ENCODE measurements at regions of chr16 and their contacts with region 1.

Region 1: GRCh38 chr16:636206-637080 is at the start of gene METTL26:
- DNase-seq: peak; percentile 91 to 98 (median 94)
- ATAC-seq: peak; percentile 90
- H3K4me3 ChIP-seq: peak within 1 kb of the TSS; percentile 99
- H3K4me3 Mint-ChIP-seq: peak within 1 kb of the TSS; percentile 92 to 99 (median 98)
- H3K27ac ChIP-seq: peak within 1 kb of the TSS; percentile 76
- H3K27ac Mint-ChIP-seq: peak within 1 kb of the TSS; percentile 97 to 99 (median 99)
- H3K4me1 ChIP-seq: peaks cover 5 to 14% of the 10 kb centered on the region in 2 donors
- H3K4me1 Mint-ChIP-seq: peaks cover 0 to 13% (median 10%) of the 10 kb centered on the region in 7 donors
- H3K27me3 ChIP-seq: no peaks in the 10 kb centered on the region
- H3K27me3 Mint-ChIP-seq: peaks cover 0 to 6% (median 0%) of the 10 kb centered on the region in 5 donors
- total RNA-seq, gene METTL26: 41.7 to 97.5 (median 64.0) TPM

Region 2: GRCh38 chr16:425082-425718 is 211.2 kb before region 1 on chr16 and contains the start of gene RAB11FIP3:
- CTCF ChIA-PET with region 1: no interaction called
- POLR2A ChIA-PET with region 1: no interaction called
- intact Hi-C with region 1: loop called in 1 of 2 experiments (anchors 1 kb)
- DNase-seq: peak; percentile 80 to 91 (median 87)
- ATAC-seq: peak; percentile 94
- H3K4me3 ChIP-seq: peak within 1 kb of the TSS; percentile 83
- H3K4me3 Mint-ChIP-seq: peak within 1 kb of the TSS; percentile 78 to 92 (median 88)
- H3K27ac ChIP-seq: peak within 1 kb of the TSS; percentile 92
- H3K27ac Mint-ChIP-seq: peak within 1 kb of the TSS in 8 of 9 donors; percentile 78 to 95 (median 90)
- H3K4me1 ChIP-seq: peaks cover 10 to 17% of the 10 kb centered on the region in 2 donors
- H3K4me1 Mint-ChIP-seq: peaks cover 22 to 39% (median 32%) of the 10 kb centered on the region in 7 donors
- H3K27me3 ChIP-seq: no peaks in the 10 kb centered on the region
- H3K27me3 Mint-ChIP-seq: peaks cover 0 to 18% (median 0%) of the 10 kb centered on the region in 5 donors
- total RNA-seq, gene RAB11FIP3: 37.9 to 53.0 (median 45.5) TPM

Region 3: GRCh38 chr16:589658-590159 is 46.7 kb before region 1 on chr16 and contains the start of gene RAB40C:
- CTCF ChIA-PET with region 1: no interaction called
- POLR2A ChIA-PET with region 1: interaction called, 5 read pairs
- intact Hi-C with region 1: loop called (anchors 1 kb)
- DNase-seq: peak; percentile 96 to 99 (median 99)
- ATAC-seq: peak; percentile 91
- H3K4me3 ChIP-seq: peak within 1 kb of the TSS; percentile 93
- H3K4me3 Mint-ChIP-seq: peak within 1 kb of the TSS; percentile 86 to 100 (median 98)
- H3K27ac ChIP-seq: peak within 1 kb of the TSS; percentile 93
- H3K27ac Mint-ChIP-seq: peak within 1 kb of the TSS; percentile 95 to 100 (median 99)
- H3K4me1 ChIP-seq: peaks cover 15 to 17% of the 10 kb centered on the region in 2 donors
- H3K4me1 Mint-ChIP-seq: peaks cover 25 to 50% (median 45%) of the 10 kb centered on the region in 7 donors
- H3K27me3 ChIP-seq: no peaks in the 10 kb centered on the region
- H3K27me3 Mint-ChIP-seq: no peaks in the 10 kb centered on the region
- total RNA-seq, gene RAB40C: 15.8 to 23.2 (median 17.8) TPM

Region 4: DNA sequence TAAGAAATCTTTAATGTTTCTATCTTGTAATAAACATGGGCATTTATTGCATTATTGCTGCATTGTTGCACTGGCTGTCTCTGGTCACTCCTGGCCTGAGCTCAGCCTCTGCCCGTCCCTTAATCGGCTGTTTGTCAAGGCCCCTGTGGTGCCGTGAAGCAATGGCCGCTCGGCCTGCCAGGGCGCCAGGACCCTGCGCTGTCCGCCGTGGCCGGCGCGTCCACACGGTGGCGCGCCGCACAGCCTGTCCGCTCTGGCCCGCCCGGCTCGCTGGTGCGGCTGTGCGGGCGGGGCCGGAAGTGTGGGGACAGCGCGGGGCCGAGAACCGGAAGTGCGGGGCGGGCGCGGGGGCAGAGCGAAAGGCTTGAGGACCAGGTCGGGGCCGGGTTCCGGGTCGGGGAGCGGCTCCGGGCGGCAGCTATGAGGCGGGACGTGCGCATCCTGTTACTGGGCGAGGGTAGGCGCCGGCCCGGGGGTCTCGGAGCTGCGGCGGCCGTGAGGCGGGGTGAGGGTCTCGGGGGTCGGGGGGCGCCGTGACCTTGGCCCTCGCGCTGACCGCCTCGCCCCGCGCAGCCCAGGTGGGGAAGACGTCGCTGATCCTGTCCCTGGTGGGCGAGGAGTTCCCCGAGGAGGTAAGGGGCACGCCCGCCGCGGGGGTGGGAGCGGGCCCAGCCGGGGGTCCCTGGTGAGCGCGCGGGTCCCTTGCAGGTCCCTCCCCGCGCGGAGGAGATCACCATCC is 31.5 kb after region 1 on chr16 and contains the start of gene RHOT2:
- CTCF ChIA-PET with region 1: interaction called, 3 read pairs
- POLR2A ChIA-PET with region 1: interaction called, 7 read pairs
- intact Hi-C with region 1: loop called (anchors 1 kb)
- DNase-seq: peak; percentile 73 to 99 (median 87)
- ATAC-seq: peak; percentile 99
- H3K4me3 ChIP-seq: peak within 1 kb of the TSS; percentile 42
- H3K4me3 Mint-ChIP-seq: peak within 1 kb of the TSS; percentile 71 to 84 (median 80)
- H3K27ac ChIP-seq: peak within 1 kb of the TSS; percentile 75
- H3K27ac Mint-ChIP-seq: peak within 1 kb of the TSS in 8 of 9 donors; percentile 61 to 93 (median 86)
- H3K4me1 ChIP-seq: peaks cover 9 to 12% of the 10 kb centered on the region in 2 donors
- H3K4me1 Mint-ChIP-seq: peaks cover 0 to 10% (median 6%) of the 10 kb centered on the region in 7 donors
- H3K27me3 ChIP-seq: no peaks in the 10 kb centered on the region
- H3K27me3 Mint-ChIP-seq: no peaks in the 10 kb centered on the region
- total RNA-seq, gene RHOT2: 145 to 232 (median 186) TPM

Region 5: GRCh38 chr16:788394-789126 is 152.1 kb after region 1 on chr16 and contains the start of gene CHTF18:
- CTCF ChIA-PET with region 1: no interaction called
- POLR2A ChIA-PET with region 1: no interaction called
- intact Hi-C with region 1: loop called in 1 of 2 experiments (anchors 2 kb)
- DNase-seq: peak; percentile 90 to 95 (median 95)
- ATAC-seq: peak; percentile 98
- H3K4me3 ChIP-seq: peak within 1 kb of the TSS; percentile 74
- H3K4me3 Mint-ChIP-seq: peak within 1 kb of the TSS; percentile 78 to 90 (median 86)
- H3K27ac ChIP-seq: peak within 1 kb of the TSS; percentile 83
- H3K27ac Mint-ChIP-seq: peak within 1 kb of the TSS in 6 of 9 donors; percentile 53 to 89 (median 78)
- H3K4me1 ChIP-seq: peaks cover 5 to 8% of the 10 kb centered on the region in 2 donors
- H3K4me1 Mint-ChIP-seq: peaks cover 0 to 14% (median 5%) of the 10 kb centered on the region in 7 donors
- H3K27me3 ChIP-seq: no peaks in the 10 kb centered on the region
- H3K27me3 Mint-ChIP-seq: no peaks in the 10 kb centered on the region
- total RNA-seq, gene CHTF18: 32.0 to 74.8 (median 51.7) TPM

Region 6: GRCh38 chr16:1533443-1533951 is 897.1 kb after region 1 on chr16 and contains the start of gene TMEM204:
- CTCF ChIA-PET with region 1: no interaction called
- POLR2A ChIA-PET with region 1: interaction called, 13 read pairs
- intact Hi-C with region 1: no loop called
- DNase-seq: peak in 8 of 9 donors; percentile 39 to 69 (median 58)
- ATAC-seq: peak; percentile 56
- H3K4me3 ChIP-seq: peak within 1 kb of the TSS; percentile 85
- H3K4me3 Mint-ChIP-seq: peak within 1 kb of the TSS; percentile 92 to 100 (median 98)
- H3K27ac ChIP-seq: peak within 1 kb of the TSS; percentile 84
- H3K27ac Mint-ChIP-seq: peak within 1 kb of the TSS; percentile 76 to 97 (median 94)
- H3K4me1 ChIP-seq: peaks cover 32 to 38% of the 10 kb centered on the region in 2 donors
- H3K4me1 Mint-ChIP-seq: peaks cover 35 to 56% (median 46%) of the 10 kb centered on the region in 7 donors
- H3K27me3 ChIP-seq: no peaks in the 10 kb centered on the region
- H3K27me3 Mint-ChIP-seq: peaks cover 0 to 3% (median 0%) of the 10 kb centered on the region in 5 donors
- total RNA-seq, gene TMEM204: 26.3 to 162 (median 47.5) TPM

Measured in naive thymus-derived CD4-positive, alpha-beta T cell (primary cell).